ENCODE measurements at regions of chr1 and their contacts with region 1.

Region 1: GRCh38 chr1:175887981-175888433 is 144.6 kb upstream of the TNR start:
- DNase-seq: peak; percentile 61
- H3K4me3 Mint-ChIP-seq: no peak overlapping the region
- H3K27ac Mint-ChIP-seq: no peak overlapping the region
- H3K4me1 Mint-ChIP-seq: no peaks in the 10 kb centered on the region
- H3K27me3 Mint-ChIP-seq: no peaks in the 10 kb centered on the region
- CTCF ChIP-seq: peak; percentile 84

Region 2: DNA sequence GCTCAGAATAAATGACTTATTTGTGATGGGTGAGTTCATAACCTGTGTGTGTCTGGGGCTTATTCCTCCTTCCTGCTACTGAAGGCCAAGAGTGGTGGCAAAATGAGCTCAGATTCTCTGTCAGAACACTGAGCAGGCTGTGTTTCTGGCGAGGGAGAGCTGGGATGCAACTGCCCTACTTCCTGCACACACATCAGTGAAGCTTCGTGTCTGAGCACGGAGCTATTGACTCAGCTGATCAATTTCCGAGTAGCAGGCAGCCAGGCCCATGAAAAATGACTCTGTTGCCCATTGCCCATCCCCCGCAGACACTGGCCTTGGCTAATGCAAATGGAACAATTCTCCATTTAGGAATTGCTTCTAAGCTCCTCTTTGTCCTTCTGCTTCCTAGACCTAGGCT is 172.3 kb before region 1 on chr1:
- CTCF ChIA-PET with region 1: no interaction called
- POLR2A ChIA-PET with region 1: no interaction called
- intact Hi-C with region 1: no loop called
- DNase-seq: no peak
- H3K4me3 Mint-ChIP-seq: no peak overlapping the region
- H3K27ac Mint-ChIP-seq: no peak overlapping the region
- H3K4me1 Mint-ChIP-seq: no peaks in the 10 kb centered on the region
- H3K27me3 Mint-ChIP-seq: peaks cover 42% of the 10 kb centered on the region
- CTCF ChIP-seq: no peak

Region 3: GRCh38 chr1:175792136-175792535 is 95.9 kb before region 1 on chr1:
- CTCF ChIA-PET with region 1: no interaction called
- POLR2A ChIA-PET with region 1: no interaction called
- intact Hi-C with region 1: loop called (anchors 1 kb)
- DNase-seq: no peak
- H3K4me3 Mint-ChIP-seq: no peak overlapping the region
- H3K27ac Mint-ChIP-seq: no peak overlapping the region
- H3K4me1 Mint-ChIP-seq: no peaks in the 10 kb centered on the region
- H3K27me3 Mint-ChIP-seq: peaks cover 58% of the 10 kb centered on the region
- CTCF ChIP-seq: no peak

Region 4: GRCh38 chr1:175817445-175817844 is 70.6 kb before region 1 on chr1:
- CTCF ChIA-PET with region 1: no interaction called
- POLR2A ChIA-PET with region 1: no interaction called
- intact Hi-C with region 1: no loop called
- DNase-seq: no peak
- H3K4me3 Mint-ChIP-seq: no peak overlapping the region
- H3K27ac Mint-ChIP-seq: no peak overlapping the region
- H3K4me1 Mint-ChIP-seq: peaks cover 12% of the 10 kb centered on the region
- H3K27me3 Mint-ChIP-seq: no peaks in the 10 kb centered on the region
- CTCF ChIP-seq: no peak

Region 5: DNA sequence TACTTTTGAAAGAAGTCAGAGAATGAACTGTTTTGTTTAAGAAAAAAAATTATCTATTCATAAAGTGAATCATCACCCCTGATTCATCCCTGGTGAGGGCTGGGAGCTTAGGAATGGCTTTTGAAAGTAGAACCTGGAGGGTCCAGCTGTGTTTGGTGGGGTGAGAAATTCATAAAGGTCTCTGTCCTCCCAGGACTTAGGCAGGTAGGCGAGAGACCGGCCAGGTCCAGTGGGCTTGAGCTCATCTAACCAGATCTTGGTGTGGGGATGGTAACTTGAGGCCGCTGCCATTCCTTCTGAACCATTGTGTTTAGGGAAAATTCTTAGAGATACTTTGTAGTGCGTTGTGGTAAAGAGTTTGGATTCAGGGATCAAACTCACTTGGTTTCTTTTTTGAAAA is 12.2 kb after region 1 on chr1:
- CTCF ChIA-PET with region 1: interaction called, 16 read pairs
- POLR2A ChIA-PET with region 1: no interaction called
- intact Hi-C with region 1: no loop called
- DNase-seq: no peak
- H3K4me3 Mint-ChIP-seq: no peak overlapping the region
- H3K27ac Mint-ChIP-seq: no peak overlapping the region
- H3K4me1 Mint-ChIP-seq: no peaks in the 10 kb centered on the region
- H3K27me3 Mint-ChIP-seq: no peaks in the 10 kb centered on the region
- CTCF ChIP-seq: no peak

Region 6: DNA sequence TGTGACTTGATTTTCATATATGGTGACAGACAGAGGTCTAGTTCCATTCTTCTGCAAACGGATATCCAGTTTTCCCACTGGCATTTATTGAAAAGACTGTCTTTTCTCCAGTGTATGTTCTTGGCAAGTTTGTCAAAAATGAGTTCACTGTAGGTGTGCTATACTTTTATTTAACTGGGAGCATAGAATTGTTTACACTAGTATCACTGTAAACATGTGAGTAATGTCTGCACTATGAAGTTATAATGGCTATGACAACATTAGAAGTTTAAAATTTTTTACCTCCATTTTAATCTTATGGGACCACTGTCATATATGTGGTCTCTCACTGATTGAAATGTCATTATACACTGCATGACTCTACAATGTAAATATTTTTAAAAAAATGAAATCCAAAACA is 112.3 kb after region 1 on chr1:
- CTCF ChIA-PET with region 1: no interaction called
- POLR2A ChIA-PET with region 1: no interaction called
- intact Hi-C with region 1: no loop called
- DNase-seq: no peak
- H3K4me3 Mint-ChIP-seq: no peak overlapping the region
- H3K27ac Mint-ChIP-seq: no peak overlapping the region
- H3K4me1 Mint-ChIP-seq: no peaks in the 10 kb centered on the region
- H3K27me3 Mint-ChIP-seq: no peaks in the 10 kb centered on the region
- CTCF ChIP-seq: no peak

Region 7: GRCh38 chr1:176073524-176074157 is 185.6 kb after region 1 on chr1:
- CTCF ChIA-PET with region 1: no interaction called
- POLR2A ChIA-PET with region 1: no interaction called
- intact Hi-C with region 1: no loop called
- DNase-seq: peak; percentile 85
- H3K4me3 Mint-ChIP-seq: no peak overlapping the region
- H3K27ac Mint-ChIP-seq: no peak overlapping the region
- H3K4me1 Mint-ChIP-seq: peaks cover 6% of the 10 kb centered on the region
- H3K27me3 Mint-ChIP-seq: no peaks in the 10 kb centered on the region
- CTCF ChIP-seq: peak; percentile 74

Measured in MCF 10A (cell line).